Heart left ventricle (tissue), 16 donors: ENCODE measurements at regions of chr22 and their contacts with region 1.

Region 1: GRCh38 chr22:19730655-19731360 is 7.5 kb downstream of the GP1BB start:
- DNase-seq: peak; percentile 82 to 93 (median 84)
- ATAC-seq: peak; percentile 80 to 91 (median 85)
- H3K4me3 ChIP-seq: peak overlapping the region in 10 of 12 donors; percentile 10 to 50 (median 42)
- H3K27ac ChIP-seq: no peak overlapping the region
- H3K4me1 ChIP-seq: peaks cover 0 to 10% (median 8%) of the 10 kb centered on the region in 12 donors
- H3K27me3 ChIP-seq: no peaks in the 10 kb centered on the region
- CTCF ChIP-seq: peak; percentile 87 to 99 (median 94)
- POLR2A ChIP-seq: no peak

Region 2: GRCh38 chr22:19806213-19807145 is 75.7 kb after region 1 on chr22:
- intact Hi-C with region 1: loop called in 1 of 10 experiments (anchors 2 kb)
- DNase-seq: peak in 1 of 5 donors; percentile 54
- ATAC-seq: no peak
- H3K4me3 ChIP-seq: no peak overlapping the region
- H3K27ac ChIP-seq: no peak overlapping the region
- H3K4me1 ChIP-seq: peaks cover 0 to 6% (median 0%) of the 10 kb centered on the region in 12 donors
- H3K27me3 ChIP-seq: no peaks in the 10 kb centered on the region
- CTCF ChIP-seq: no peak
- POLR2A ChIP-seq: no peak

Region 3: GRCh38 chr22:19909350-19910179 is 178.8 kb after region 1 on chr22:
- intact Hi-C with region 1: loop called (anchors 1 to 2 kb)
- DNase-seq: peak; percentile 76 to 88 (median 82)
- ATAC-seq: peak; percentile 89 to 93 (median 92)
- H3K4me3 ChIP-seq: no peak overlapping the region
- H3K27ac ChIP-seq: no peak overlapping the region
- H3K4me1 ChIP-seq: no peaks in the 10 kb centered on the region
- H3K27me3 ChIP-seq: no peaks in the 10 kb centered on the region
- CTCF ChIP-seq: peak; percentile 77 to 94 (median 82)
- POLR2A ChIP-seq: no peak

Region 4: DNA sequence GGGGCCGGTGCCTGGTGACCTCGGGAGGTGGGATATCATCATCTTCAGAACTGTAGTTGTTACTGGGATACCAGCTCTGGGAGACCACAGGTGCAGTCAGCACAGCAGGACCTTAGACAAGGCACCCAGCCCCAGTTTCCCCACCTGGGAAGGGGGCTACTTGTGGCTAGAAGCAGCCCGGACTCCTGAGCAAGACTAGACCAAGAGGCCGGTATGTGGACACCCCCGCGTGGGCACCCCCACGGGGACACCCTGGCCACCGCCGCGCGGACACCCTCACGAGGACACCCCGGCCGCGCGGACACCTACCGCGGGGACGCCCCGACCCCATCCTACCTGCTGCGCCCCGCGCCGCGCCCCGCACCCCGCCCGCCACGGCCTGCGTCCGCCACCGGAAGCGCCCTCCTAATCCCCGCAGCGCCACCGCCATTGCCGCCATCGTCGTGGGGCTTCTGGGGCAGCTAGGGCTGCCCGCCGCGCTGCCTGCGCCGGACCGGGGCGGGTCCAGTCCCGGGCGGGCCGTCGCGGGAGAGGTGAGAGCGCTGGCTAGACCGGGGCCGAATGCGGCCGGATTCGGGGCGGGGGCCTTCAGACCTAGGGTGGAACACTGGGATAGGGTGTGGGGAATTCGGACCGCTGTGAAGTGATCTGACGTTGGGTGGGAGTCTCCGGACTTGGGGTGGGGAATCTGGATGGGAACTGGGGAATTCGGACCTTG is 210.7 kb after region 1 on chr22 and contains the starts of genes COMT and TXNRD2:
- intact Hi-C with region 1: loop called in 1 of 10 experiments (anchors 2 kb)
- DNase-seq: peak; percentile 71 to 91 (median 79)
- ATAC-seq: peak; percentile 35 to 91 (median 82)
- H3K4me3 ChIP-seq: peak within 1 kb of the TSS; percentile 65 to 99 (median 87)
- H3K27ac ChIP-seq: peak within 1 kb of the TSS; percentile 88 to 99 (median 94)
- H3K4me1 ChIP-seq: peaks cover 4 to 62% (median 31%) of the 10 kb centered on the region in 12 donors
- H3K27me3 ChIP-seq: no peaks in the 10 kb centered on the region
- CTCF ChIP-seq: no peak
- POLR2A ChIP-seq: peak in 1 of 2 donors; percentile 32
- total RNA-seq, gene COMT: 69.7 to 195 (median 119) TPM
- total RNA-seq, gene TXNRD2: 23.5 to 42.5 (median 33.5) TPM